CD8-positive, alpha-beta T cell (primary cell): ENCODE measurements at regions of chr9 and their contacts with region 1.

Region 1: DNA sequence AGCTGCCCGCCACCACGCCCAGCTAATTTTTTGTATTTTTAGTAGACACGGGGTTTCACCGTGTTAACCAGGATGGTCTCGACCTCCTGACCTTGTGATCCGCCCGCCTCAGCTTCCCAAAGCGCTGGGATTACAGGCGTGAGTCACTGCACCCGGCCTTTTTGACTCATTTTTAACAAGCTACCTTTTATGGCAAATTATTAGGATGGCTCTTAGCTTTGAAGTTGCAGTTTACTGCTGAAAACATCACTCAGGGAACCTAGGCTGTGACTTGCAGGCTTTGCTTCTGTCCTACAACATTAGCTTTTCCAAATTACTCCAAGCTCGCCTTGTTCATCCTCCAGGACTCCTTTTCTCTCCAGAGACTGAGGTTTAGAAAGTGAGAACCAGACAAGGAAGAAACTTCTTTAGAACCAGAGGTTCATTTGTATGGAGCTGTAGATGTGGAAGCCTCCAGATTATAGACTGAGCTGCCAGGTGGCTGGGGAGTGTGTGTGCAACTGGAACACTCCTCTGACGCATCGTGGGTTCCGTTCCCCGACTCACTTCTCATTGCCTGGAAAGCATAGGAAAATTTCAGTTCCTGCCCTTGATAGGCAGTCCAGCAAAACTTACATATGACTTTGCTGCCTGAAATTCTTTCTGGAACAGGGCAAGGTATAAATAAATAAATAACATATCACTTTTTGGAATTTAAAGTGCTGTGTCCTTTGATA is 23.8 kb upstream of the SPTAN1 start:
- DNase-seq: no peak
- ATAC-seq: no peak
- H3K4me3 ChIP-seq: no peak overlapping the region
- H3K4me3 Mint-ChIP-seq: no peak overlapping the region
- H3K27ac ChIP-seq: no peak overlapping the region
- H3K27ac Mint-ChIP-seq: no peak overlapping the region
- H3K4me1 ChIP-seq: no peaks in the 10 kb centered on the region
- H3K4me1 Mint-ChIP-seq: no peaks in the 10 kb centered on the region
- H3K27me3 ChIP-seq: no peaks in the 10 kb centered on the region
- H3K27me3 Mint-ChIP-seq: no peaks in the 10 kb centered on the region
- CTCF ChIP-seq: no peak

Region 2: DNA sequence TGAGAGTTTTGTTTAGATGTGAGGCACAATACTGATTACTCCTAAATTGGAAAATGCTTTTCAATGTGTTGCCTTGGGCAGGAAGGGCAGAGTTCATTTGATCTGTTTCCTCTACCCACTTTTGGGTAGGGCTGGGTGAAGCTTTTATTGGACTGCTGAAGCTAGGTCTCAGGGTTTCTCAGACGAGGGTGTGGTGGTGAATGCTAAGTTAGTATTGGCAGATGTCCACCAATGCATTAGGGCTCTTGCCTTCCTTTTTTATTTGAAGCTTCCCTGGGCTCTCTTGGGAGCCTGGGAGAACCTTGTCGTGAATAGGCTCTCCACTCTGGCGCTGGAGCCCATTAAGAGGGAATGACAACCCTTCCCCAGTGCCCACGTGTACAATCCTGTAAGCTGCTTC is 46.9 kb after region 1 on chr9:
- CTCF ChIA-PET with region 1: no interaction called
- POLR2A ChIA-PET with region 1: interaction called, 3 read pairs
- intact Hi-C with region 1: loop called in 1 of 2 experiments (anchors 2 kb)
- DNase-seq: no peak
- ATAC-seq: no peak
- H3K4me3 ChIP-seq: no peak overlapping the region
- H3K4me3 Mint-ChIP-seq: no peak overlapping the region
- H3K27ac ChIP-seq: no peak overlapping the region
- H3K27ac Mint-ChIP-seq: no peak overlapping the region
- H3K4me1 ChIP-seq: peaks cover 8% of the 10 kb centered on the region
- H3K4me1 Mint-ChIP-seq: peaks cover 13% of the 10 kb centered on the region
- H3K27me3 ChIP-seq: no peaks in the 10 kb centered on the region
- H3K27me3 Mint-ChIP-seq: no peaks in the 10 kb centered on the region
- CTCF ChIP-seq: no peak

Region 3: DNA sequence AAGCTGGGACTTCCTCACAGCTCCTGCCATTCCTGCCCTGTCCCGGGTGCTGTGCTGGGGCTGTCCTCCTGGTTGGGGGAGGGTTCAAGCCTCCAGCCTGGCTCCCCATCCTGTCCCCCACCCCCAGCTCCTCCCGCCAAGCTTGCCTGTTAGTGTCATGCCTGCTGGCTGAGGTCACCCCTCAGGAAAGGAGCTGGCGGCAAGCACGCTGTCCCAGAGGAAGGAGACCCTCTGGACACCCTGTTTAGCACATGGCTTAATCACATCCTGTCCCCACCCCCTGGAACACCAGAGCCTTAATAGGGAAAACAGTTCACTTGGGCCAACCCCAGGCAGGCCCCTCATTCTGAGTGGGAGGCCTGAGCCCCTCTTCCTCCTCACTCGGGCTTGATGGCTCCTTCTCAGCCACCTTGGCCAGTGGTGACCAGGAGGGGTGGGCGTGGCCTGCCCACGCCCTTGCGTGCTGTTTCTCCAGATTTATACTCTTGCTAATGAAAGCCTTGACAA is 383.0 kb after region 1 on chr9:
- CTCF ChIA-PET with region 1: no interaction called
- POLR2A ChIA-PET with region 1: no interaction called
- intact Hi-C with region 1: no loop called
- DNase-seq: no peak
- ATAC-seq: no peak
- H3K4me3 ChIP-seq: no peak overlapping the region
- H3K4me3 Mint-ChIP-seq: no peak overlapping the region
- H3K27ac ChIP-seq: peak overlapping the region in 1 of 2 experiments; percentile 22
- H3K27ac Mint-ChIP-seq: no peak overlapping the region
- H3K4me1 ChIP-seq: peaks cover 53% of the 10 kb centered on the region
- H3K4me1 Mint-ChIP-seq: peaks cover 42% of the 10 kb centered on the region
- H3K27me3 ChIP-seq: no peaks in the 10 kb centered on the region
- H3K27me3 Mint-ChIP-seq: no peaks in the 10 kb centered on the region
- CTCF ChIP-seq: no peak